ENCODE measurements at regions of chr21 and their contacts with region 1.

Region 1: DNA sequence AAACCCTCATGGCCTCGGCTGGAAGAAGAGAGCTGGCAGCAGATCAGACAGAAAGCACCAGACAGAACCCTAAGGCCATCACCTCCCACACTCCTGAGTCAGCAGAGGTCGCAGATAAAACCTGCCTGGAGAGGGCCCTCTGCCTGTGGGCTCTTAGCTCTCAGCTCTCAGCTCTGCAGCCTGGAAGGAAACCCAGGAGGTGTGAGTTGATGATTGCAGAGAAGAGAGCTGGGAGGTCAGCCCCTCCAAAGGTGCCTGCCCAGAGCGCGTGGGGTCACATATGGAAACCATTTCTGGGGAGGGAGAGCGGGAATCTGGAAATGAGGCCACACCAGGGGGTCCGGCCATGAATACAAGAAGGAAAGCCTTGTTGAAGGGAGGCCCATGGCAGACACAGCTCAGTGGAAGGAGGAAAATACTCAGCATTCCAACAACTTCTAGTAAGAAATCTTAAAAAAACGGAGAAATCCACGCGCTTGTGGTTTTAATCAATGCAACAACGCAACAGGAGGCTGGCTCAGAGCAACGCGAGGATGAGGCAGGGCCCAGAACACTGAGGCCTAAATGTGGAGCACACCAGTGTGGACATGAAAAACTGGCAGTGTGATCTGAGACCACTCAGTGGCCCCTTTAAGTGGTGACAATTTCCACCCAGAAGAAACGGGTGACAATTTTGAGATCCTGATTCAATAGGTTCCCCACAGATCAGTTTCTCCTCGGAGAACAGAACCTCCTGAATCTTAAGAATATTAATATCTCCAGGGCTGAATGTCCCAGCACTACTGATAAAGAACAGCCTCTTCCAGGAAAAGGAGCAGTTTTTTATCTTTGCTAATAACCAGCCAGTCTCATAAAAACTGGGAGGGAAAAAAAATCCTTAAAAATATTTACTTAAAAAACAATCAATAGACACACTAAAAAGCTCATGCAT is 45.7 kb downstream of the PSMG1 start:
- DNase-seq: no peak
- H3K4me3 ChIP-seq: no peak overlapping the region
- H3K27ac ChIP-seq: no peak overlapping the region
- H3K27me3 ChIP-seq: peaks cover 6% of the 10 kb centered on the region
- CTCF ChIP-seq: 0 out of 2 replicates have a peak, but pooled peaks have one; percentile 4

Region 2: DNA sequence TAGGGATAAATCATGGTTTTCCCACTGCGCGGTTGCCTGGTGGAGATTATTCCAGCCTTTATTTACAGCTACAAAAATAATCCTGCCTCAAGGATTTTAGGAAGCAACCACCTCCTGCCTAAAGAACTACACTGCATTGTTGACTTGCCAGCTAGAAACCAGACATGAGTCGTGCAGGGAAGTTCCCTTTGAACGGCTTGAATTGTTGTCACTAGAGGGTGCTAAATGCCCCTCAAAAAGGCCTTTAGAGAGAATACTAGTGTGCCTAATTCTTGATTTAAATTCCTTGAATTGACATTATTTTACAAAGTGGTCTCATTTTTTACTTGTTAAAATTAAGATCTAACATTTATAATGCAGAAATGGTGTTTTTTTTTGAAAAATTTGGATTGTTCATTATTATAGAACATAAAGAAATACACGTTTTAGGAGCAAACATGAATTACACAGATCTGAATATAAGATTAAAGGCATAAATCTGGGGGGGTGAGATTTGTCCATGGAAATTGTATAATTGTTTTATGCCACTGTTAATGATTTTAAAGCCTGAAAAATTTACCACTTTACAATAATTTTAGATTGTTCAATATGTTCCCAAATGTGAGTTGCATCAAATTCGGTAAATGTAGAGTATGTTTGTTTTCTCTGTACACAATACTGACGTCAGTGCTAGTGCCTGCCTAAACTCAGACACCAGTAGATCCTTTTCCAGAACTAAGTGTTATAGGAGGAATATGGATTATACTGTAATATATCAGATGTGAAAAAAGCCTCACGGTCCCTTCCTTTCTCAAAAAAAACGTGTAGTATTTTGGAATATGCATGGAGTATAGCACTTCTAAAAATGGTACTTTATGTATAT is 631.6 kb before region 1 on chr21:
- CTCF ChIA-PET with region 1: interaction called, 11 read pairs
- POLR2A ChIA-PET with region 1: no interaction called
- DNase-seq: peak; percentile 46
- H3K4me3 ChIP-seq: no peak overlapping the region
- H3K27ac ChIP-seq: no peak overlapping the region
- H3K27me3 ChIP-seq: peaks cover 11% of the 10 kb centered on the region
- CTCF ChIP-seq: peak; percentile 79

Region 3: DNA sequence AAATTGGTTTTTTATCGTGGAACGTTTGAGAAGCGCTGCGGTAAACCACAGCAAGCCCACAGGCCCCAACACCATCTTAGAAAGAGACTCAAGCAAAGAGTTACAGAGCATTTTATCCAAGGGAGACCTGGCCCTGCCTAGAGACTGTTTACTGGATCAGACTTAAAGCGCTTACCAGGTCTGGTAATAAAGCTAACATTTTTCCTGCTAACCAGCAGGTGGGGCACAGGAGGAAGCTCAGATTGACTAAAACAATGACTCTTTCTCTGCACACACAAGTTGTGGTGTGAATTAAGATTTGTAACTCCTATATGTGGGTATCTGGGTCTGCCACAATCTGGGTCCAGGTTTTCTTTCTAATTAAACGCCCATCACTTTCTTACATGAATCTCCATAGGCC is 468.3 kb before region 1 on chr21:
- CTCF ChIA-PET with region 1: interaction called, 11 read pairs
- POLR2A ChIA-PET with region 1: no interaction called
- DNase-seq: no peak
- H3K4me3 ChIP-seq: no peak overlapping the region
- H3K27ac ChIP-seq: no peak overlapping the region
- H3K27me3 ChIP-seq: peaks cover 74% of the 10 kb centered on the region
- CTCF ChIP-seq: peak; percentile 63

Region 4: DNA sequence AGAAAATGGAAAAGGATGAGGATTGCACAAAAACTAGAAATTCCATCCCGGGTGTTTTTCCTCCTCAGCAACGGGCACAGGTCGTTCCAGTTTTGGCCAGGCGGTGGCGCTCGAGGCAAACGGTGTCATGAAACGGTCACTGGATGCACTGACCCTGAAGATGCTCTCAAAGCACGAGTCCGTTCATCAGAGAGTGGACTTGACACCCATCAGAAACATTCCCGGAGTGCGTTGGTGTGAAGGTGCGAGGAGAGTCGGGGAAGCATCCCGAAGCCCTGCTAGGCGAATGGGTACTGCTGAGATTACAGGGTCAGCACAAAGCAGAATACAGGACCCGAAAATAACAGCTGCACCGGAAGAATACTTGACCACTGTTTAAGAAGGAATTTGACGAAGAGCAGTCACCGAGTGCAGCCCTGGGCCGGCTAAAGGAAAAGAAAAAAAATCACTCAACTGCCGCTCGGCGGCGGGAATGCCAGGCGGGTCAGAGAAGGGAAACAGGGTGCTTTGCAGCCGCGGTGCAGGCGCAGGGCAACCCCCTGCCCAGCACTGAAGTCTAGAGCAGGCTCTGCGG is 403.5 kb before region 1 on chr21:
- CTCF ChIA-PET with region 1: interaction called, 15 read pairs
- POLR2A ChIA-PET with region 1: no interaction called
- DNase-seq: peak; percentile 49
- H3K4me3 ChIP-seq: peak overlapping the region; percentile 57
- H3K27ac ChIP-seq: peak overlapping the region; percentile 63
- H3K27me3 ChIP-seq: no peaks in the 10 kb centered on the region
- CTCF ChIP-seq: peak; percentile 96

Region 5: GRCh38 chr21:38768471-38769063 is 368.9 kb before region 1 on chr21:
- CTCF ChIA-PET with region 1: interaction called, 10 read pairs
- POLR2A ChIA-PET with region 1: no interaction called
- DNase-seq: peak; percentile 96
- H3K4me3 ChIP-seq: peak overlapping the region; percentile 14; the same call in 1 of the 2 replicates
- H3K27ac ChIP-seq: peak overlapping the region; percentile 99
- H3K27me3 ChIP-seq: no peaks in the 10 kb centered on the region
- CTCF ChIP-seq: no peak; the same call in 1 of the 2 replicates

Region 6: DNA sequence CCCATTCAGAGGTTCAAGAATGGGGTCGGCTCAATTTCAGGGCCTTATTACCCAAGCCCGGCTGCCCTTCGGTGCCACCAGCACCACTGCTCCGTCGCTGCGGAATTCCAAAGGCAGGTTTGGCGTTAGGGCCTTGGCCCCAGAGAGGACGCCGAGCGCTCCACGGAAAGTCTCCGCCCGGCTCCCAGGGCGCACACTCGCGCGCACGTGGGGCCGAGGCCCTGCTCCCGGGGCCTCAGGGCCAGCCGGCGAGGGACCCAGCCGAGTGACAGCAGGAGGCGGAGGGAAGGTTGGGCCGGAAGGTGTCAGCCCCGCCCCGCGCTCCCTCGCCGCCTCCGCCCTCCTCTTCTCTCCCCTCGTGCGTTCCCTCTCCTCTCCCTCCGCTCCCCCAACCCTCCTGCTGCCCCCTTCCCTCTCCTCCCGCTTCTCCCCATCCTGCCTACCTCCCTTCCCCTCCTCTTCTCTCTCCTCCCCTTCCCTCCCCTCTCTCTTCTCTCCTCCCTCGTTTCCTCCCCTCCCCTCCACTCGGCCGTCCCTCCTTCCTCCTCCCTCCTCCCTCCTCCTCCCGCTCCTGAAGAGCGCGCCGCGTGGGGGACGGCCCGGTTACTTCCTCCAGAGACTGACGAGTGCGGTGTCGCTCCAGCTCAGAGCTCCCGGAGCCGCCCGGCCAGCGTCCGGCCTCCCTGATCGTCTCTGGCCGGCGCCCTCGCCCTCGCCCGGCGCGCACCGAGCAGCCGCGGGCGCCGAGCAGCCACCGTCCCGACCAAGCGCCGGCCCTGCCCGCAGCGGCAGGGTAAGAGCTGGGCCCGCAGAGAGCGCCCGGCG is 332.0 kb before region 1 on chr21 and contains the start of gene ETS2:
- CTCF ChIA-PET with region 1: interaction called, 32 read pairs
- POLR2A ChIA-PET with region 1: no interaction called
- DNase-seq: peak; percentile 80
- H3K4me3 ChIP-seq: peak within 1 kb of the TSS; percentile 88
- H3K27ac ChIP-seq: peak within 1 kb of the TSS; percentile 41
- H3K27me3 ChIP-seq: no peaks in the 10 kb centered on the region
- CTCF ChIP-seq: no peak; the same call in 1 of the 2 replicates
- polyA plus RNA-seq, gene ETS2: 60.1 and 62.7 TPM in 2 replicates

Region 7: DNA sequence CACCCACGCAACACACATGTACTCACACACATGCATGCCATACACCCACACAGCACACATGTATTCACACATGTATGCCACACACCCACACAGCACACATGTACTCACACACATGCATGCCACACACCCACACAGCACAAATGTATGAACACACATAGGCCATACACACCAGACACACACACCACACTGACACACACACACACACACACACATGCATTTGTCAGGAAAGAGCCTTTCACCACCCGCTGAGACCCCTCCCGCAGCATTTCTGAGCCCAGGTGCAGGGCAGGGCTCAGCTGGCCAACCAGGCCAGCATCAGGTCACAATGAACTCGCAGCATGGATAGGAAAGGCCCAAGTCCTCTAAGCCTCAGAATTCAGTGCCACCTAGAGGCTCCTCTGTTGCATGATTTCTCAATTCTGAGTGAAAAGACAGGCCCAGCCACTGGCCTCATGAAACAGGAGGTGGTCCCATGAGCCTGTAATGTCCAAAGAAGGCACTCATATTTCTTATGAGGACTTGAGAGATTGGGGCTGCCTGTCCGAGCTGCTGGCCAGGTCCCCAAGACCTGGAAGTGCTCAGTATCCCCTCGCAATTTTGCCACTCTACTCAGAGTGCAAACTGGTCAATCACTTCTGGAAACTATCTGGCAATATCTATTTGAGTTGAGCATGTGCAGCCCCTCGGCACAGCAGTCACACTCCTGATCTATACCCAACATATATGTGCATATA is 11.6 kb before region 1 on chr21:
- CTCF ChIA-PET with region 1: interaction called, 24 read pairs
- POLR2A ChIA-PET with region 1: no interaction called
- DNase-seq: peak; percentile 49
- H3K4me3 ChIP-seq: no peak overlapping the region
- H3K27ac ChIP-seq: no peak overlapping the region
- H3K27me3 ChIP-seq: no peaks in the 10 kb centered on the region
- CTCF ChIP-seq: peak; percentile 78